Brain microvascular endothelial cell (primary cell): ENCODE measurements at regions of chr22 and their contacts with region 1.

Region 1: GRCh38 chr22:37260901-37261336 is 16.9 kb upstream of the RAC2 start:
- DNase-seq: peak; percentile 37
- H3K4me3 ChIP-seq: no peak overlapping the region
- H3K27ac ChIP-seq: no peak overlapping the region
- H3K27me3 ChIP-seq: no peaks in the 10 kb centered on the region
- CTCF ChIP-seq: peak; percentile 98

Region 2: DNA sequence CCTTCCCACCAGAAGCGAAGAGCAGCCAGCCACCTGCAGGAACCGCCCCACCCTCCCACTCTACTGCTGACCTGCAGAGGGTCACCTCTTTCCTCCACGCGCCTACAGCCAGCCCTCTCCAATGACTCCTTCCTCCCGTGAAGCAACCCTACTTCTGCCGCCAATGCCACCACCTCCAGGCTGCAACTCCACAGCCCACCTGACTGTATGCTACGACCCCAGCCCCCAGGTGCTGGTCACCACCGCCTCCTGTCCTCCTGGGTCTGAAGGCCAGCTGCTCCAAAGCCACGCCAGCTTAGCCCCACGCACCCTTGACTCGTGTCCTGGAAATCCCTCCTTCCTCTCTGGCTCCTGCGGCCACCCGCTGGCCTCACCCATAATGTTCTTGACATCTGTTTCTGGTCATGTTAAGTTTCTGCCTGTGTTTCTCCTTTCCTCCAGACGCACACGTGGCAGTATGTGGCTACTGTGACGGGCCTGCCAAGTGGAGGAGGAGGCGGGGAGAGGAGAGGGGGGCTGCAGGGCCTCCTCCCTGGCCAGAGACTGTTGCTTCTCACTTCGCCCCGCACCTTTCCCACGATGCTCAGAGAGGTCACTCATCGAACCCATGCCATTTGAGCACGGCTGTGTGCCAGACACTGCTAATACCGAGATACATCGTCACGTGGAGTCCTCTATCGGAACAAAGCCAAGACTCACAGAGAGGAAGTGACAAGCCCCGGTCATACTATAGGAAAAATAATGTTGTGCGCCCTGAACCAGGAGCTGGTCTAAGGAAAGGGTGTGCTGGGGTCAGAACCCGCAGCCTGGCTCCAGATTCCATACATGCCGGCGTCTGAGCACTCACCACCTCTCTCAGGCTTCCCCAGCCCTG is 84.5 kb before region 1 on chr22:
- in situ Hi-C with region 1: loop called (anchors 5 kb)
- DNase-seq: peak; percentile 47
- H3K4me3 ChIP-seq: peak overlapping the region; percentile 5
- H3K27ac ChIP-seq: no peak overlapping the region
- H3K27me3 ChIP-seq: no peaks in the 10 kb centered on the region
- CTCF ChIP-seq: peak; percentile 4

Region 3: DNA sequence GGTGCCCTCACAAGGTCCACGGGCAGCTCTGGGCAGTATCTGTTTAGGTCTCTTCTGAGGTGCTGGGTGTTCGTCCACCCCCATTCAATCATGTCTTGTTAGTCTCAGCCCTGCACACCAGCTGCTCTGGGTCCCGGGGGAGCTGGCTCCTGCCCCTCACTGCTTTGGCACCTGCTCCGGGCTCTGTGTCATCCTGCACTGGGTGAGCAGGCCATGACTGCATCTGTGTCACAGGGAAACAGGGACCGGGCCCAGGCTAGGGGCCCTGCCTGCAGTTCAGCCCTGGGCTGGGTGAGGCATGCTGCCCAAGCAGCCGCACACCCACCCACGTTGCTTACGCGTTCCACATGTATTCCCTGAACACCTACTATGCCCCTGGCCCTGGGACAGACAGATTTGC is 122.4 kb after region 1 on chr22:
- in situ Hi-C with region 1: no loop called
- DNase-seq: no peak
- H3K4me3 ChIP-seq: no peak overlapping the region
- H3K27ac ChIP-seq: no peak overlapping the region
- H3K27me3 ChIP-seq: peaks cover 15% of the 10 kb centered on the region
- CTCF ChIP-seq: no peak